ENCODE measurements at regions of chr17 and their contacts with region 1.

Region 1: GRCh38 chr17:30278032-30278431 is 13.7 kb downstream of the BLMH start:
- DNase-seq: peak in 1 of 3 donors; percentile 63
- ATAC-seq: peak; percentile 69 to 80
- H3K4me3 ChIP-seq: no peak overlapping the region
- H3K27ac ChIP-seq: no peak overlapping the region
- H3K4me1 ChIP-seq: no peaks in the 10 kb centered on the region
- H3K27me3 ChIP-seq: no peaks in the 10 kb centered on the region

Region 2: DNA sequence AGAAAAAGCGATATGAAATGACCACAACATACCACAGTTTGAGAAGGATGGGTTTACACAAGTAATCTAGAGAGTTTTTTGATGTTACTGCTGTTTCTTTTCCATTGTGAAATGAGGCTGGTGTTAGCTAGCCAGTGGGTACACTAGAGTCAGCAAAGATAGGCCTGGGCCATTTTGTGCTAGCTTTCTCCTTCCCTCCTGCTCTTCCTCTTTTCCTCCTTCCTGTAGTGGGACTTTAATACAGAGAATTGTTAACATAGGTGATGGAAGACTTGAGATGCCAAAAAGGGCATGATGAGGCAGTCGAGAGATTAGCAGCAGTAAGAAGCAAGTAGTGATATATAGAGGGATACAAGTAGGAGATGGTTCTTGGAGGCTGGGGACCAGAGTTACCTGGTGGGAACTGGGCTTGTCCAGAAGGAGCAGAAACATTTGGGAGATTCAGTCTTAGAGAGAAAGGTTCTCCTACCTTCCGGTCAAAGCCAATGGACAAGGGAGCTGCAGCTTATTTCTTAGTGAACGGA is 153.7 kb before region 1 on chr17:
- intact Hi-C with region 1: loop called (anchors 5 to 10 kb)
- DNase-seq: no peak
- ATAC-seq: no peak
- H3K4me3 ChIP-seq: no peak overlapping the region
- H3K27ac ChIP-seq: no peak overlapping the region
- H3K4me1 ChIP-seq: no peaks in the 10 kb centered on the region
- H3K27me3 ChIP-seq: no peaks in the 10 kb centered on the region

Region 3: GRCh38 chr17:30134551-30134950 is 143.5 kb before region 1 on chr17:
- intact Hi-C with region 1: loop called (anchors 5 to 10 kb)
- DNase-seq: no peak
- ATAC-seq: no peak
- H3K4me3 ChIP-seq: no peak overlapping the region
- H3K27ac ChIP-seq: no peak overlapping the region
- H3K4me1 ChIP-seq: peaks cover 3% of the 10 kb centered on the region
- H3K27me3 ChIP-seq: no peaks in the 10 kb centered on the region

Measured in right cardiac atrium (tissue), 5 donors.